SK-N-SH (cell line): ENCODE measurements at regions of chr11 and their contacts with region 1.

Region 1: DNA sequence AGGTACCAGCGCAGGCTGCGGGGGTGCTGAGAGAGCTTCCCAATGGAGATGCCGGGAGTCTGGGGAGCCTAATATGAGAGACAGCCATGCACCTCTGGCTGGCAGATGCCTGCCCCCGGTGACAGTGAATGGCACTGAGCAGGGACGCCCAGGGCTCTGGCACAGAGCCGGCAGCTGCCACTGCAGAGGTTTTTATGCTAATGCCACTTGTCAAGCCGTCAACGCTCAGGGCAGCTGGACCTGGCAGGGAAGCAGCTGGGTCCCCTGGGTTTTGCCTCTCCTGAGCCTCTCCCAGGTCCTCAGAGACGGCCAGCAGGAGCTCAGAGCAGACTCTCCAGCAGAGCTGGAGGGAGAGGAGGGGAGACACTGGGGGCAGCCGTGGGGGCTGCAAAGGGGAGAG is 573.6 kb downstream of the BUD13 start:
- DNase-seq: peak; percentile 87
- H3K4me3 ChIP-seq: no peak overlapping the region
- H3K27ac ChIP-seq: peak overlapping the region in 1 of 2 experiments; percentile 82; a peak in 2 of 4 replicates
- H3K4me1 ChIP-seq: peaks cover 0 to 47% of the 10 kb centered on the region in 2 experiments; a peak in 2 of 4 replicates
- H3K27me3 ChIP-seq: no peaks in the 10 kb centered on the region
- CTCF ChIP-seq: no peak
- EP300 ChIP-seq: peak in 1 of 2 experiments; percentile 94; a peak in 2 of 4 replicates
- RAD21 ChIP-seq: peak; percentile 34

Region 2: DNA sequence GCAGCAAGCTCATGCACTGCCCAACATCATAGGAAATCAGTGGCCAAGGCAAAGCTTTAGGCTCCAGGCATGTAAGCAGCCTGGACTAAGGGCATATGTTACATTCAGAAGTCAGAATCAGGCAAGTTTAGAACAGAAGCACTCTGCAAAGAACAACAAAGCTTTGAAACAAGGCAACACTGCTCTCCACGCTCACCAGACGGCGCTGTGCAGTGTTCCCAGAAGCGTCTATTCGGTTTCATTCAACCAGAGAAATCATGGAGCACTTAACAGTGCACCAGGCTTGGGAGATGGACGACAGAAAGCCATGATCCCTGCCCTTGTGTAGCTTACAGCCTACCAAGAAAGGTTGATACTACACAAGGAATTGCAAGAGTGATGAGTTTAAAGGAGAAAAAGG is 17.8 kb after region 1 on chr11:
- CTCF ChIA-PET with region 1: interaction called, 30 read pairs
- POLR2A ChIA-PET with region 1: interaction called, 12 read pairs
- DNase-seq: no peak
- H3K4me3 ChIP-seq: no peak overlapping the region
- H3K27ac ChIP-seq: peak overlapping the region in 1 of 2 experiments; percentile 64; a peak in 1 of 4 replicates
- H3K4me1 ChIP-seq: peaks cover 0 to 25% of the 10 kb centered on the region in 2 experiments; a peak in 1 of 4 replicates
- H3K27me3 ChIP-seq: no peaks in the 10 kb centered on the region
- CTCF ChIP-seq: peak; percentile 68
- EP300 ChIP-seq: no peak
- RAD21 ChIP-seq: peak; percentile 62